Body of pancreas (tissue), 4 donors: ENCODE measurements at regions of chr6 and their contacts with region 1.

Region 1: GRCh38 chr6:154675602-154676088 is 57.6 kb upstream of the SCAF8 start:
- DNase-seq: peak; percentile 91 to 95 (median 94)
- ATAC-seq: peak; percentile 100
- H3K4me3 ChIP-seq: no peak overlapping the region
- H3K27ac ChIP-seq: no peak overlapping the region
- H3K4me1 ChIP-seq: no peaks in the 10 kb centered on the region
- H3K27me3 ChIP-seq: no peaks in the 10 kb centered on the region
- CTCF ChIP-seq: peak; percentile 98 to 100 (median 99)
- POLR2A ChIP-seq: no peak

Region 2: DNA sequence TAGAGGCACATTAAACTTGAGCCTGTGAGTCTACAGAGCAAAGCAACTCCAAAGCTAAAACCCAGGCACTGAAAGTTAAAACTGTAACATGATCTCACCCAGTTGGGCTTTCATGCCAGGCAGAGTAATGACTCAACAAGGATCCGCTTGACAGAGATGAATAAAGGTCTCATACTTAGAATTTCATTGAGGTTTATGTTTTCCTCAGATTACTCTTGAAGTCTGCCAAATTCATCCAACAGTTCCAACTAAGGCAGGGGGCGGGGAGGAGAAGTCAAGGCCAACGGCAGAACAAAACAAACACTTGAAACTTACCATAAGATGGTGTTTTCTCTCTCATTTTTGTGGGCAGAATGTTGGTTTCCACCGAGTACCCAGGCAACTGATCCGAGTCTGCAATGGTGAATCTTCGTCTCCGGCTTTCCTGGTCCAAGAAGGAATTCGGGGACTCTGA is 265.0 kb before region 1 on chr6:
- intact Hi-C with region 1: no loop called
- DNase-seq: peak; percentile 23 to 58 (median 43)
- ATAC-seq: peak; percentile 87
- H3K4me3 ChIP-seq: no peak overlapping the region
- H3K27ac ChIP-seq: peak overlapping the region; percentile 52 to 74 (median 69)
- H3K4me1 ChIP-seq: peaks cover 33% of the 10 kb centered on the region
- H3K27me3 ChIP-seq: no peaks in the 10 kb centered on the region
- CTCF ChIP-seq: no peak
- POLR2A ChIP-seq: no peak

Region 3: DNA sequence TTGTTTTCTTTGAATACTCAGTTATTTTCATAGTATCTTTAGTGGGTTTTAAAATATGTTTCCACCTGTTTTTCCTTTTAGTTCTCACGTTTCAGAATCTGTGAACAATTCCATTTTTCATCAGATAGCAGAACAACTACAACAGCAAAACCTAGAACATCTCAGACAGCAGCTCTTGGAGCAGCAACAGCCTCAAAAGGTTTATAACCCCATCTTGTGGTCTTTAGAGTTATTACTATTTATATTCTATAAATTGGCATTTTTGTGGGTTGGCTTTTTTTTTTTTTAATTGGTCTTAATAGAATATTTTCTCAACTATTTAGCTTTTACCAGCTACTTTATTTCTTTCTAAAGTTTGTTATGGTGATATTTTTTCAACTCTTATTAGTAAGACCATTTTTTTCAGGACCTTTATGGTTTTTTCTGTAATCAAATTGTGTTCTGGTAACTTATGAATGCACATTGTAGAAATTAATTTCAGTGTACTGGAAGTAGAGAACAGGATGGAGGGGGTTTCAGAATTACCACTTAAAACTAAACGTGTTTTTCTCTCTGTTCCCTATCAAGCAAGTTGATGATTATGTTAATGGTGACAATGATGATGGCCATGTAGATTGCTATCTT is 129.8 kb after region 1 on chr6:
- intact Hi-C with region 1: loop called (anchors 10 kb)
- DNase-seq: no peak
- ATAC-seq: no peak
- H3K4me3 ChIP-seq: no peak overlapping the region
- H3K27ac ChIP-seq: no peak overlapping the region
- H3K4me1 ChIP-seq: no peaks in the 10 kb centered on the region
- H3K27me3 ChIP-seq: no peaks in the 10 kb centered on the region
- CTCF ChIP-seq: peak; percentile 27 to 55 (median 48)
- POLR2A ChIP-seq: no peak

Region 4: GRCh38 chr6:155333414-155333813 is 657.8 kb after region 1 on chr6:
- intact Hi-C with region 1: no loop called
- DNase-seq: no peak
- ATAC-seq: no peak
- H3K4me3 ChIP-seq: no peak overlapping the region
- H3K27ac ChIP-seq: no peak overlapping the region
- H3K4me1 ChIP-seq: peaks cover 12% of the 10 kb centered on the region
- H3K27me3 ChIP-seq: no peaks in the 10 kb centered on the region
- CTCF ChIP-seq: no peak
- POLR2A ChIP-seq: no peak